Left colon (tissue), 2 donors: ENCODE measurements at regions of chr2 and their contacts with region 1.

Region 1: GRCh38 chr2:99562516-99562915 is 72.7 kb upstream of the REV1 start:
- DNase-seq: no peak
- ATAC-seq: no peak

Region 2: DNA sequence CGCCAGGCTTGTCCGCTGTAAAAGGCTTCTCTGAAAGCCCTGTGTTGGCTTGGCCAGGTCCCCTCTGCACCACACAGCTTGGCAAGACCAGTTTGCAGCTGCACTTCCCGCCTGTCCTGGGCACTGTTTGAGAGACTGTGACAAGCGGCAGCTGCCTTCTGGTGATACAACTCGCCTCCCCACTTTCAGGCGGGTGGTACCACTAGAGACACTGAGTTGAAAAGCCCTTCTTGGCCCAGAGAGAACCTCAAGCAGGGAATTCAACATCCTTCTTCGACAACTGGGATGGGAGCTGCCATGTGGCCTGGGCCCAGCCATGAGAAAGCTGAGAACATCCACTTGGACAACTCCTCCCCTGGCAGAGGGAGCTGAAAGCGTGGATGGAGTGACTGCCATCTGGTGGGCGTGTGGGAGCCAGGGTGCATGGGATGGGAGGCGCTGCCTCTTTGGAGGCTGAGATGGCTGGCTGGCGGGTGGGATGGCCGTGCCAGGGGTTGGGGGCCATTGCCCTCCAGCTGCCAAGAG is 52.8 kb after region 1 on chr2:
- intact Hi-C with region 1: no loop called
- DNase-seq: no peak
- ATAC-seq: no peak

Region 3: GRCh38 chr2:100242891-100243619 is 680.5 kb after region 1 on chr2:
- intact Hi-C with region 1: loop called in 1 of 2 experiments (anchors 5 kb)
- DNase-seq: peak; percentile 36 to 73
- ATAC-seq: peak; percentile 65